ENCODE measurements at regions of chr19 and their contacts with region 1.

Region 1: DNA sequence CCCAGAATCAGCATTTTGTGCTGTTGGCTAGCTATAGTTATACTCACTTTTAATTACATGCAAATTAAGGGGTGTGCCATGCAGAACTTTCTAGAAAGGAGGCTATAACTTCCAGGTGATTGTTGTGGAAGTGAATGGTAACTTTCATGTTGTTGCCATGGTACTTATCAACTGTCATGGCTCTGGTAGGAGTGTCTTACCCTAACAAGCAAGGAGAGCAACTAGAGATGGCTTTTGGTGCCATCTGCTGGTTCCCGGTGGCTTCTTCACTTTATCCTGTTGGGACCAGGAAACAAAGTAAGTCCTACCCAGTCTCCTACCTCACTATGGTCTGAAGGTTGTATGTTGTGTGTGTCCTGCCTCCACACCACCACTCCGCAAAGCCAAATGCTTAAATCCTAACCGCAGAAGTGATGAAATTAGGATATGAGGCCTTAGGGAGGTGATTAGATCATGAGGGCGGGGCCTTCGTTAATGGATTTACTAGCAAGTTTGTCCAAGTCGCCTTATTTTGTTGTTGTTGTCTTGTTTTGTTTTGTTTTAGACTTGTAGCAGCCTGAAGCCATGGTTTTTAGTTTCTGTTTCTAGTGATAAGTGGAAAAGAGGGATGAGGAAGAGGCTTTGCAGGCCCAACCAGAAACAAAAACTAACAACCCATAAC is 22.6 kb downstream of the FBXL12 start:
- DNase-seq: peak; percentile 55 to 92 (median 87)
- ATAC-seq: peak; percentile 48
- H3K4me3 ChIP-seq: no peak overlapping the region
- H3K4me3 Mint-ChIP-seq: peak overlapping the region in 3 of 10 donors; percentile 16 to 43 (median 16)
- H3K27ac ChIP-seq: peak overlapping the region; percentile 63
- H3K27ac Mint-ChIP-seq: peak overlapping the region; percentile 66 to 97 (median 90)
- H3K4me1 ChIP-seq: peaks cover 0 to 7% of the 10 kb centered on the region in 2 donors
- H3K4me1 Mint-ChIP-seq: peaks cover 15 to 43% (median 34%) of the 10 kb centered on the region in 7 donors
- H3K27me3 ChIP-seq: no peaks in the 10 kb centered on the region
- H3K27me3 Mint-ChIP-seq: peaks cover 0 to 3% (median 0%) of the 10 kb centered on the region in 5 donors

Region 2: DNA sequence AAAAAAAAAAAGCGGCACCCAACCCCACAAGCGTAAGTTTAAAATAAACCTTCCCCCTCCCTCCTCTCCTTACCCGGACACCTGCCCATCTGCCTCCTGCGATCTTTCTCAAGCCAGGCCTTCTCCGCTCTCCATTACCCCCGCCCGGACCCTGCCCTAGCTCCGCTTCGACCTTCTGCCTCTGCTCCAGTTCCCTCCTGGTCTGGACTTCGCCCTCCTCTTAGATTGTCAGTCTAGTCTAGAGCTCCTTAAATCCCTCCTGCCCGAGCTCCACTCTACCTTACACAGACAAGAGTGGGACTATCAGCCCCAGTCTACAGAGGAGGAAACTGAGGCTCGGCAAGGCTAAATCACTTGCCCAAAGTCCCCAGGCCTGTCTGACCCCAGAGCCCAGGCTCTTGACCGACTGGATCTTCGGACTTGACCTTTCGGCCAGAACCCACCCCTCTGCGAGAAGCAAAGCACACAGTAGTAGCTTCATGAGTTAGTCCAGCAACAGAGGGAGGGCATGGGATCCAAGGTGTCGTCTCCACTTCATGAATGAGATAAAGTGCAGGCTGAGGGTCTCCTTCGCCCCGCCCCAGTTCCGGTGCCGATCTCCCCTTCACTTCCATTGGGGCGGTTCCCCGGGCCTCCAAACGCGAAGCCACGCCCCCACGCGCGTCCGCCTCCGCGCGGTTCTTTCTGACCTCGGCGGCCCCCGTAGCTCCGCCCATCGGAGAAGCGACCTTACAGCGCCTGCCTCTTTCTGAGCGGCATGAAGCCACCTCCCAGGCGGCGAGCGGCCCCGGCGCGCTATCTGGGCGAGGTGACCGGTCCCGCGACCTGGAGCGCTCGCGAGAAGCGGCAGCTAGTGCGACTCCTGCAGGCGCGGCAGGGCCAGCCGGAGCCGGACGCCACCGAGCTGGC is 1876.4 kb before region 1 on chr19 and contains the start of gene SNAPC2:
- CTCF ChIA-PET with region 1: no interaction called
- POLR2A ChIA-PET with region 1: no interaction called
- intact Hi-C with region 1: loop called in 1 of 2 experiments (anchors 5 kb)
- DNase-seq: peak; percentile 95 to 99 (median 98)
- ATAC-seq: peak; percentile 71
- H3K4me3 ChIP-seq: peak within 1 kb of the TSS; percentile 86
- H3K4me3 Mint-ChIP-seq: peak within 1 kb of the TSS; percentile 88 to 97 (median 94)
- H3K27ac ChIP-seq: peak within 1 kb of the TSS; percentile 75
- H3K27ac Mint-ChIP-seq: peak within 1 kb of the TSS; percentile 76 to 97 (median 92)
- H3K4me1 ChIP-seq: peaks cover 25 to 34% of the 10 kb centered on the region in 2 donors
- H3K4me1 Mint-ChIP-seq: peaks cover 15 to 52% (median 38%) of the 10 kb centered on the region in 7 donors
- H3K27me3 ChIP-seq: peaks cover 3 to 20% of the 10 kb centered on the region in 2 donors
- H3K27me3 Mint-ChIP-seq: peaks cover 12 to 33% (median 14%) of the 10 kb centered on the region in 5 donors
- total RNA-seq, gene SNAPC2: 12.3 to 24.4 (median 21.4) TPM

Region 3: GRCh38 chr19:9309139-9309973 is 486.9 kb before region 1 on chr19 and contains the start of gene ZNF699:
- CTCF ChIA-PET with region 1: no interaction called
- POLR2A ChIA-PET with region 1: interaction called, 3 read pairs
- intact Hi-C with region 1: loop called (anchors 1 kb)
- DNase-seq: peak; percentile 94 to 100 (median 97)
- ATAC-seq: peak; percentile 94
- H3K4me3 ChIP-seq: peak within 1 kb of the TSS; percentile 95
- H3K4me3 Mint-ChIP-seq: peak within 1 kb of the TSS; percentile 89 to 98 (median 96)
- H3K27ac ChIP-seq: peak within 1 kb of the TSS; percentile 98
- H3K27ac Mint-ChIP-seq: peak within 1 kb of the TSS; percentile 89 to 99 (median 97)
- H3K4me1 ChIP-seq: peaks cover 6 to 15% of the 10 kb centered on the region in 2 donors
- H3K4me1 Mint-ChIP-seq: peaks cover 4 to 37% (median 24%) of the 10 kb centered on the region in 7 donors
- H3K27me3 ChIP-seq: no peaks in the 10 kb centered on the region
- H3K27me3 Mint-ChIP-seq: peaks cover 0 to 2% (median 0%) of the 10 kb centered on the region in 5 donors
- total RNA-seq, gene ZNF699: 9.1 to 19.1 (median 15.5) TPM

Region 4: GRCh38 chr19:9435279-9436268 is 360.7 kb before region 1 on chr19 and contains the start of gene ZNF266:
- CTCF ChIA-PET with region 1: no interaction called
- POLR2A ChIA-PET with region 1: no interaction called
- intact Hi-C with region 1: loop called (anchors 2 kb)
- DNase-seq: peak; percentile 82 to 93 (median 91)
- ATAC-seq: peak; percentile 92
- H3K4me3 ChIP-seq: peak within 1 kb of the TSS; percentile 73
- H3K4me3 Mint-ChIP-seq: peak within 1 kb of the TSS; percentile 89 to 97 (median 93)
- H3K27ac ChIP-seq: peak within 1 kb of the TSS; percentile 94
- H3K27ac Mint-ChIP-seq: peak within 1 kb of the TSS; percentile 95 to 99 (median 98)
- H3K4me1 ChIP-seq: peaks cover 26 to 27% of the 10 kb centered on the region in 2 donors
- H3K4me1 Mint-ChIP-seq: peaks cover 20 to 54% (median 48%) of the 10 kb centered on the region in 7 donors
- H3K27me3 ChIP-seq: no peaks in the 10 kb centered on the region
- H3K27me3 Mint-ChIP-seq: no peaks in the 10 kb centered on the region
- total RNA-seq, gene ZNF266: 34.0 to 73.9 (median 55.0) TPM

Region 5: DNA sequence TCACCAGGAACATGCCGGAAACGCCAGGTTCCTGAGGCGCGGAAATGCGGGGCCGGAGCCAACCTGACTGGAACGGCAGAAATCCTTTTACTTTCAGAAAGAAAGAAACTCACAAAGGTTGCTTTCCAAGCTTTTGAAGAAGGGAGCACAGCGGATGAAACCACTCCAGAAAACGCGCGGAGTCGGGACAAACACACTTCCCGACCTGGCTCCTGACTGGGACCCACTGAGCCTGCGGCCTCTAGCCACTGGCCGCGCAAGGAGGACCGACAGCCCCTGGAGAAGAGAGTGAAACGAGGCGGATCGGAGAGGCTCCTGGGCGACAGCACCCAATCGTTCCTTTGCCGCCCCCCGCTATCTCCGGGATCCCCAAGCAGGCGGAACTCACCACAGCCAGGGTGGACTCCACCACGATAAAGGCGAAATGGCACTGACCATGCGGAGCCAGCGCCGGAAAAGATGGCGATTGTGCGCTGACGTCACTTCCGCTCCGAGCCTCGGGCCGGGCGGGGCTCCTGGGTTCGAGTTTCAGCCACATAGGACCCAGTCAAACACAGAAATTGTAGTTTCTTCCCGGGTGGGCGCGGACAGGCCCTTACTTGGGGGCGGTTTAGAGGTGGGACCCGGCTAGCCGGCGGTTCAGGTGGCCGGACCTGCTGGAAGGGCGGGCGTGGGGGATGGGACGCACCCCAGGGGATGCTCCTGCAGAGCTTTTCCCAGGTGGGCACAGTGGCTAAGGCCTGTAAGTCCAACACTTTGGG is 212.0 kb before region 1 on chr19 and contains the start of gene ZNF121:
- CTCF ChIA-PET with region 1: interaction called, 14 read pairs
- POLR2A ChIA-PET with region 1: no interaction called
- intact Hi-C with region 1: loop called (anchors 1 kb)
- DNase-seq: peak; percentile 61 to 82 (median 74)
- ATAC-seq: peak; percentile 87
- H3K4me3 ChIP-seq: peak within 1 kb of the TSS; percentile 98
- H3K4me3 Mint-ChIP-seq: peak within 1 kb of the TSS; percentile 91 to 99 (median 96)
- H3K27ac ChIP-seq: peak within 1 kb of the TSS; percentile 97
- H3K27ac Mint-ChIP-seq: peak within 1 kb of the TSS; percentile 94 to 99 (median 95)
- H3K4me1 ChIP-seq: peaks cover 7 to 15% of the 10 kb centered on the region in 2 donors
- H3K4me1 Mint-ChIP-seq: peaks cover 21 to 54% (median 34%) of the 10 kb centered on the region in 7 donors
- H3K27me3 ChIP-seq: no peaks in the 10 kb centered on the region
- H3K27me3 Mint-ChIP-seq: peaks cover 0 to 5% (median 4%) of the 10 kb centered on the region in 5 donors
- total RNA-seq, gene ZNF121: 28.3 to 49.4 (median 47.0) TPM

Region 6: GRCh38 chr19:9674663-9675357 is 121.4 kb before region 1 on chr19 and contains the start of gene ZNF562:
- CTCF ChIA-PET with region 1: no interaction called
- POLR2A ChIA-PET with region 1: interaction called, 3 read pairs
- intact Hi-C with region 1: loop called (anchors 1 to 2 kb)
- DNase-seq: peak; percentile 66 to 82 (median 76)
- ATAC-seq: peak; percentile 92
- H3K4me3 ChIP-seq: peak within 1 kb of the TSS; percentile 99
- H3K4me3 Mint-ChIP-seq: peak within 1 kb of the TSS; percentile 86 to 99 (median 96)
- H3K27ac ChIP-seq: peak within 1 kb of the TSS; percentile 91
- H3K27ac Mint-ChIP-seq: peak within 1 kb of the TSS; percentile 87 to 99 (median 96)
- H3K4me1 ChIP-seq: peaks cover 0 to 4% of the 10 kb centered on the region in 2 donors
- H3K4me1 Mint-ChIP-seq: peaks cover 11 to 33% (median 29%) of the 10 kb centered on the region in 7 donors
- H3K27me3 ChIP-seq: no peaks in the 10 kb centered on the region
- H3K27me3 Mint-ChIP-seq: no peaks in the 10 kb centered on the region
- total RNA-seq, gene ZNF562: 8.9 to 18.6 (median 16.5) TPM

Region 7: DNA sequence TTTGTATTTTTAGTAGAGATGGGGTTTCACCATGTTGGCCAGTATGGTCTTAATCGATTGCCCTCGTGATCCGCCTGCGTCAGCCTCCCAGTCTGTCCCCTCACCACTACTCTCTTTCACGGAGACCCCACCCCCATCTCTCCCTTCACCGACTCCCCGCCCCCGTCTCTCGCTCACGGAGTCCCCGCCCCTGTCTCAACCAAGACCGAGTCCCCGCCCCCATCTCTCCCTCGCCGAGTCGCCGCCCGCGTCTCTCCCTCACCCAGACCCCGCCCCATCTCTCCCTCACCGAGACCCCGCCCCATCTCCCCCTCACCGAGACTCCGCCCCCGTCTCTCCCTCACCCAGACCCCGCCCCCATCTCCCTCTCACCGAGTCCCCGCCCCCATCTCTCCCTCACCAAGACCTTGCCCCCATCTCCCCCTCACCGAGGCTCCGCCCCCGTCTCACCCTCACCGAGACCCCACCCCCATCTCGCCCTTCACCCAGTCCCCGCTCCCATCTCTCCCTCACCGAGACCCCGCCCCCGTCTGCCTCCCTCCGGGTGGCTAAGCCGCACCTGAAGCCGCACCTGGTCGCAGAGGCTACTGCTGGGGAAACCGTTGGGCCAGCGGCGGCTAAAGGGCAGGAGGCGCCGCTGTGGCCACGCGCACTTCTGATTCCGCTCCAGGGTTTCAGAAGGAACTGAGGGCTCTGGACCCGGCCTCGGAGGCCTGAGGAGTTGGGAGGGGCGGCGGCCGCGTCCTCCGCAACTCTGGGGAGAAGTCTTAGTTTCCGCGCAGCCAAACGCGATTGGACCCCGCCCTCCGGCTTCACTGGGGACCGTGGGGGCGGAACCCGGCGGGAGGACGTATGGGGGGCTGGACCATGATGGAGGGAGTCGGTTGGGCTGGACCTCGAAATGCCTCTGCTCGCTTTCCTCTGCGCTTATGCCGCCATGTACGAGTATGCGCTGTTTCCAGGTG is 10.6 kb before region 1 on chr19:
- CTCF ChIA-PET with region 1: interaction called, 3 read pairs
- POLR2A ChIA-PET with region 1: interaction called, 4 read pairs
- intact Hi-C with region 1: loop called (anchors 1 kb)
- DNase-seq: peak; percentile 81 to 97 (median 92)
- ATAC-seq: peak; percentile 92
- H3K4me3 ChIP-seq: peak overlapping the region; percentile 86
- H3K4me3 Mint-ChIP-seq: peak overlapping the region; percentile 73 to 95 (median 88)
- H3K27ac ChIP-seq: peak overlapping the region; percentile 80
- H3K27ac Mint-ChIP-seq: peak overlapping the region; percentile 83 to 99 (median 94)
- H3K4me1 ChIP-seq: peaks cover 5 to 9% of the 10 kb centered on the region in 2 donors
- H3K4me1 Mint-ChIP-seq: peaks cover 10 to 37% (median 27%) of the 10 kb centered on the region in 7 donors
- H3K27me3 ChIP-seq: no peaks in the 10 kb centered on the region
- H3K27me3 Mint-ChIP-seq: no peaks in the 10 kb centered on the region

Measured in naive thymus-derived CD4-positive, alpha-beta T cell (primary cell).